Activated naive CD4-positive, alpha-beta T cell treated with anti-CD3 and anti-CD28 coated beads, Interleukin-2, amount 10 ng/mL, durations not matched to agents 7 days and 5 days (primary cell): ENCODE measurements at regions of chr1 and their contacts with region 1.

Region 1: GRCh38 chr1:26833432-26834405 is 7.2 kb downstream of the ZDHHC18 start:
- DNase-seq: peak; percentile 96
- H3K4me3 Mint-ChIP-seq: peak overlapping the region; percentile 61
- H3K27ac Mint-ChIP-seq: peak overlapping the region; percentile 97
- H3K4me1 Mint-ChIP-seq: peaks cover 70% of the 10 kb centered on the region
- H3K27me3 Mint-ChIP-seq: no peaks in the 10 kb centered on the region

Region 2: DNA sequence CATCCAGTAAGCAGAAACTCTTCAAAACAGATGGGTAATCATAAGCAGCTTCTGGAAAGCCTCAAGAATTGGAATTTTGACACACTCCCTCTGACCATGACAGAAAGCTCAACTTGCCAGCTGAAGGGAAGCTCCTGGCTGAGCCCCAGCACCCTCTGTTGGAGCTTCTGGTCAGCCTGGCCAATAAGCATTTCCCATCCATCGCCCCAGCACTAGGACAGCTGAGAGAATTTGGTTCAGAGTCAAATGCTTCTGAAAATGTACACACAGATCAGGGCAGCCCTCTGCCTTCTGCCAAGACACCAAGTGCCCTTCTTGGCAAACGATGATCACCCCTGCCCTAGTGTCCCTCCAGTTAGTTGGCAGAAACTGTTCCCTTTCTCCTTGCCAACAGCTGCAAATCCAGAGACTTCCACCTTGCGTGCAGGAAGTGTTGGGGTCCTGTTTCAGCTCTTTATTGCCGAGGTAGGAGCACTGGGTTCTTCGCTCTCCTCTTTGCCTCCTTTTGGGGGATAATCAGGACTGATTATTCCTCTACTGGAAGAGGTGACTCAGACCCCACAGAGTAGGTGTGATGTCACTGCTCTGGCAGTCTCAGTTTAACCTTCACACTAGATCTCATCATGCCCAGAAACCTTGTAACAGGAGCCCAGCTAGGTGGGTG is 34.1 kb before region 1 on chr1:
- CTCF ChIA-PET with region 1: interaction called, 10 read pairs
- DNase-seq: peak; percentile 31
- H3K4me3 Mint-ChIP-seq: peak overlapping the region; percentile 46
- H3K27ac Mint-ChIP-seq: peak overlapping the region; percentile 94
- H3K4me1 Mint-ChIP-seq: peaks cover 58% of the 10 kb centered on the region
- H3K27me3 Mint-ChIP-seq: no peaks in the 10 kb centered on the region

Region 3: GRCh38 chr1:26811057-26811456 is 22.7 kb before region 1 on chr1:
- CTCF ChIA-PET with region 1: interaction called, 58 read pairs
- DNase-seq: no peak
- H3K4me3 Mint-ChIP-seq: no peak overlapping the region
- H3K27ac Mint-ChIP-seq: no peak overlapping the region
- H3K4me1 Mint-ChIP-seq: peaks cover 26% of the 10 kb centered on the region
- H3K27me3 Mint-ChIP-seq: no peaks in the 10 kb centered on the region

Region 4: GRCh38 chr1:26820784-26821269 is 12.9 kb before region 1 on chr1:
- CTCF ChIA-PET with region 1: interaction called, 29 read pairs
- DNase-seq: peak; percentile 46
- H3K4me3 Mint-ChIP-seq: peak overlapping the region; percentile 54
- H3K27ac Mint-ChIP-seq: peak overlapping the region; percentile 90
- H3K4me1 Mint-ChIP-seq: peaks cover 30% of the 10 kb centered on the region
- H3K27me3 Mint-ChIP-seq: no peaks in the 10 kb centered on the region